ENCODE measurements at regions of chr16 and their contacts with region 1.

Region 1: DNA sequence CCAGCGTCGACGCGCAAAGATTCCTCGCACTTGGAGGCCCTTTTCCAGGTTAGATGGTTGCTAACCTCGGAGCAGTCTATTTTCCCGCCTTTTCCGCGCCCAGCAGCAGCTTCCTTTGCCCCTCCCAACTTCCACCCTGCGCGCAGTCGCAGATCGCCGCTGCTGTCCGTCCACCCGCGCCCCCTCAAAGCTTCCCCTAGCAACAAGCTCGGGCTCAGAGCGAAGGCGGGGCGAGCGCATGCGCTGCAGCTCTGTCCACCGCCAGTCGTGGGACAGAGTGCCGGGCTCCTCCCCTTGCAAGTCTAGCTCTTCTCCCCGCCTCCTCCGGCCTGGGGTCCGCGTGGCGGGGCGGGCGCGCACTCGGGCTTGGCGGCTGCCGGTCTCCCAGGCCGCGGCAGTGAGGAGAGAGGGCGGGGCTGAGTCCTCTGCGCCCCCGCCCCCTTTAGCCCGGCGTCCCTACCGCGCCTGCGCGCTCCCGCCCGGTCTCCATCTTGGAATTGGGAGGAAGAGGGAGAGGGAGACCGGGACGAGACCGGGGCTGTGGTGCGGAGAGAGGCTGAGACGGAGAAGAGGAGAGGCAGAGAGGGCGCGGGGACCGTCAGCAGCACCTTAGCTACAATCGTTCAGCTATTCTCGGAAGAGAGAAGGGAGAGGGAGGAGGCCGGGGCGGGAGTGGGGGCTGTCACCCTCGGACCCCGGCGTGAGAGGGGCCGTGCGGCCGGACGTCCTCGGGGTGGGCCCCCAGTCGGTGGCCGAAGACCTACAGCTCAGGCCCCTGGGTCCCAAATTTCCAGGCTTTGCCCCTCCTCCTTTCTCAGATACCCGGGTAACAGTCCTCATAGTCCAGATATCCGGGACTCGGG is at the start of gene TAOK2:
- DNase-seq: peak; percentile 99
- H3K4me3 ChIP-seq: peak within 1 kb of the TSS; percentile 87
- H3K27ac ChIP-seq: peak within 1 kb of the TSS; percentile 55
- H3K4me1 ChIP-seq: peaks cover 20% of the 10 kb centered on the region
- H3K27me3 ChIP-seq: no peaks in the 10 kb centered on the region
- total RNA-seq, gene TAOK2: 57.7 and 57.9 TPM in 2 replicates

Region 2: GRCh38 chr16:29900102-29900887 is 73.3 kb before region 1 on chr16 and contains the start of gene ASPHD1:
- in situ Hi-C with region 1: no loop called
- DNase-seq: peak; percentile 95
- H3K4me3 ChIP-seq: peak within 1 kb of the TSS; percentile 82
- H3K27ac ChIP-seq: peak within 1 kb of the TSS; percentile 81
- H3K4me1 ChIP-seq: peaks cover 9% of the 10 kb centered on the region
- H3K27me3 ChIP-seq: no peaks in the 10 kb centered on the region
- total RNA-seq, gene ASPHD1: 6.9 and 18.7 TPM in 2 replicates

Region 3: DNA sequence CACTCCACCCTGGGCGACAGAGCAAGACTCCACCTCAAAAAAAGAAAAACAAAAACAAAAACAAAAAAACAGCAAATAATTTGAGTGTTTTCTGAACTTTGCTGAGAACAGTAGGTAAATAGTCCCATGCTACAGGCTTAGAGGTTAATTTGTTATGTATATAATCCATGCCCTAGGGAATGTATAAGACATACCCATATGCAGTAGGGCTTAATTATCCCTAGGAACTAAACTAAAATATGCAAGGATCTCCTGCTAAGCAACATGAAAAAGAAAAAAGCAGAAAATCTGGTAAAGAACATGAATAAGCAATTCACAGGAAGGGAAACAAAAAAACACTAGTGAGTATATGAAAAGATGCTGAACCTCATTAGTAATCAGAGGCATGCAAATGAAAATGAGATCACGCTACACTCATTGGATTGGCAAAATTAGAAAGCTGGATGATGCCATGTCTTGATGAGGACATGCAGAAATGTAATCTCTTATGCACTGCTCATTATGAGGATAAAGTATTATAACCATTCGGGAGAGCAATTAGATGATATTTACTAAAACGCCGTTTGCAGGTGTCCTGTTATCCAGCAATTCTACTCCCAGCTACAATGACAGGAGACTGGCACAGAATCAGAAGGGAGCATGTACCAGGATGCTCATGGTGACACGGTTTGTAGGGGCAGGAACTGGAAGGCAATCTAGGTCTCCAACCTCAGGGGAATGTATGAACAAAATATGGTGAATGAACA is 53.2 kb before region 1 on chr16:
- in situ Hi-C with region 1: loop called (anchors 5 kb)
- DNase-seq: no peak
- H3K4me3 ChIP-seq: no peak overlapping the region
- H3K27ac ChIP-seq: no peak overlapping the region
- H3K4me1 ChIP-seq: peaks cover 11% of the 10 kb centered on the region; the same call in 1 of the 2 replicates
- H3K27me3 ChIP-seq: no peaks in the 10 kb centered on the region

Region 4: GRCh38 chr16:30028438-30029076 is 54.9 kb after region 1 on chr16:
- in situ Hi-C with region 1: loop called (anchors 10 kb)
- DNase-seq: peak; percentile 33
- H3K4me3 ChIP-seq: no peak overlapping the region
- H3K27ac ChIP-seq: no peak overlapping the region
- H3K4me1 ChIP-seq: no peaks in the 10 kb centered on the region
- H3K27me3 ChIP-seq: peaks cover 44% of the 10 kb centered on the region

Measured in GM23248 (cell line).